CD8-positive, alpha-beta T cell (primary cell): ENCODE measurements at regions of chr2 and their contacts with region 1.

Region 1: DNA sequence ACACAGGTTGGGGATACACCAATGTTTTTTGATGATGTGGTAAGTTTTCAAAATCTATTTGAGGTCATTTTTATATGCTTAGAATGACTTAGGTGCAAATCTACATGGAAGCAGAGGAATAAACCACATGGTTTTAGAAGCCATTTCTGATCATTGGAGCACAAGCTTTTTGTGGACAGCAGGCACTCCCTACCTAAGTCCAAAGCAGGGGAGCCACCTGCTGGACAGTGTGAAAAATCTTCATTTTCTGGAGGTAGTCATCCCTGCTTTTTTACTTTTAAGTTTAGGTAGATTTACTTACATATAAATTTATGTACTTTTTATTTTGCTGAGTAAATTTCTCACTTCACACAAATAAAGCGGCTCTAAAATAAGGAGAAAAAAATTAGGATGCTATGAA is 323.2 kb downstream of the PLCL1 start:
- DNase-seq: peak; percentile 2 to 69 (median 32)
- ATAC-seq: peak; percentile 58
- H3K4me3 ChIP-seq: no peak overlapping the region
- H3K4me3 Mint-ChIP-seq: no peak overlapping the region
- H3K27ac ChIP-seq: no peak overlapping the region
- H3K27ac Mint-ChIP-seq: no peak overlapping the region
- H3K4me1 ChIP-seq: no peaks in the 10 kb centered on the region
- H3K4me1 Mint-ChIP-seq: no peaks in the 10 kb centered on the region
- H3K27me3 ChIP-seq: no peaks in the 10 kb centered on the region
- H3K27me3 Mint-ChIP-seq: no peaks in the 10 kb centered on the region
- CTCF ChIP-seq: peak; percentile 48

Region 2: GRCh38 chr2:197710424-197711042 is 417.1 kb before region 1 on chr2:
- CTCF ChIA-PET with region 1: interaction called, 3 read pairs
- POLR2A ChIA-PET with region 1: no interaction called
- intact Hi-C with region 1: loop called (anchors 2 kb)
- DNase-seq: no peak
- ATAC-seq: no peak
- H3K4me3 ChIP-seq: no peak overlapping the region
- H3K4me3 Mint-ChIP-seq: no peak overlapping the region
- H3K27ac ChIP-seq: no peak overlapping the region
- H3K27ac Mint-ChIP-seq: no peak overlapping the region
- H3K4me1 ChIP-seq: peaks cover 40% of the 10 kb centered on the region
- H3K4me1 Mint-ChIP-seq: peaks cover 61% of the 10 kb centered on the region
- H3K27me3 ChIP-seq: no peaks in the 10 kb centered on the region
- H3K27me3 Mint-ChIP-seq: no peaks in the 10 kb centered on the region
- CTCF ChIP-seq: no peak

Region 3: DNA sequence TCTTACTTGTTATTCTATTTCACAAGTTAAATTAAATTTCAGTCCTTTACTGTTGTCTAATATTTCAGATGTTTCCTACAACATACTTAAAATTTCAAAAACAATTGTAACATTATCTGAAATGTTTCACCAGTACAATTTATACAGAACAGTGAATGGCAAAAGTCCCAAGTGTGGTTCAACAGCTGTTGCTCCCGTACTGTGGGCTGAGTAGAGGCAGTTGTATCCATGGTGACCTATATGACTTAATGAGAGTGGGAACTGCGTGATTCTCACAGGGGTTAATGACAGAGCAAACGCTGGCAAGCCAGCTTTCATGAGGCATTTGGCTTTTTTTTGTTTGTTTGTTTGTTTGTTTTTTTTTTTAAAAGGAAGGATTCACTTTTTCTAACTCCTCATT is 328.6 kb before region 1 on chr2:
- CTCF ChIA-PET with region 1: interaction called, 36 read pairs
- POLR2A ChIA-PET with region 1: interaction called, 4 read pairs
- intact Hi-C with region 1: loop called in 1 of 2 experiments (anchors 1 kb)
- DNase-seq: no peak
- ATAC-seq: no peak
- H3K4me3 ChIP-seq: no peak overlapping the region
- H3K4me3 Mint-ChIP-seq: no peak overlapping the region
- H3K27ac ChIP-seq: no peak overlapping the region
- H3K27ac Mint-ChIP-seq: no peak overlapping the region
- H3K4me1 ChIP-seq: peaks cover 12% of the 10 kb centered on the region
- H3K4me1 Mint-ChIP-seq: peaks cover 9% of the 10 kb centered on the region
- H3K27me3 ChIP-seq: no peaks in the 10 kb centered on the region
- H3K27me3 Mint-ChIP-seq: peaks cover 11% of the 10 kb centered on the region
- CTCF ChIP-seq: no peak

Region 4: GRCh38 chr2:198188982-198189381 is 61.4 kb after region 1 on chr2:
- CTCF ChIA-PET with region 1: no interaction called
- POLR2A ChIA-PET with region 1: no interaction called
- intact Hi-C with region 1: no loop called
- DNase-seq: no peak
- ATAC-seq: no peak
- H3K4me3 ChIP-seq: no peak overlapping the region
- H3K4me3 Mint-ChIP-seq: no peak overlapping the region
- H3K27ac ChIP-seq: no peak overlapping the region
- H3K27ac Mint-ChIP-seq: no peak overlapping the region
- H3K4me1 ChIP-seq: no peaks in the 10 kb centered on the region
- H3K4me1 Mint-ChIP-seq: no peaks in the 10 kb centered on the region
- H3K27me3 ChIP-seq: no peaks in the 10 kb centered on the region
- H3K27me3 Mint-ChIP-seq: peaks cover 10% of the 10 kb centered on the region
- CTCF ChIP-seq: no peak